Activated naive CD4-positive, alpha-beta T cell treated with anti-CD3 and anti-CD28 coated beads for 36 hours (primary cell): ENCODE measurements at regions of chr17 and their contacts with region 1.

Region 1: GRCh38 chr17:58006924-58007780 is at the start of gene SRSF1:
- DNase-seq: peak; percentile 99
- H3K4me3 Mint-ChIP-seq: peak within 1 kb of the TSS; percentile 99
- H3K27ac Mint-ChIP-seq: peak within 1 kb of the TSS; percentile 100
- H3K4me1 Mint-ChIP-seq: peaks cover 39% of the 10 kb centered on the region
- H3K27me3 Mint-ChIP-seq: no peaks in the 10 kb centered on the region
- total RNA-seq, gene SRSF1: 248 to 257 TPM

Region 2: DNA sequence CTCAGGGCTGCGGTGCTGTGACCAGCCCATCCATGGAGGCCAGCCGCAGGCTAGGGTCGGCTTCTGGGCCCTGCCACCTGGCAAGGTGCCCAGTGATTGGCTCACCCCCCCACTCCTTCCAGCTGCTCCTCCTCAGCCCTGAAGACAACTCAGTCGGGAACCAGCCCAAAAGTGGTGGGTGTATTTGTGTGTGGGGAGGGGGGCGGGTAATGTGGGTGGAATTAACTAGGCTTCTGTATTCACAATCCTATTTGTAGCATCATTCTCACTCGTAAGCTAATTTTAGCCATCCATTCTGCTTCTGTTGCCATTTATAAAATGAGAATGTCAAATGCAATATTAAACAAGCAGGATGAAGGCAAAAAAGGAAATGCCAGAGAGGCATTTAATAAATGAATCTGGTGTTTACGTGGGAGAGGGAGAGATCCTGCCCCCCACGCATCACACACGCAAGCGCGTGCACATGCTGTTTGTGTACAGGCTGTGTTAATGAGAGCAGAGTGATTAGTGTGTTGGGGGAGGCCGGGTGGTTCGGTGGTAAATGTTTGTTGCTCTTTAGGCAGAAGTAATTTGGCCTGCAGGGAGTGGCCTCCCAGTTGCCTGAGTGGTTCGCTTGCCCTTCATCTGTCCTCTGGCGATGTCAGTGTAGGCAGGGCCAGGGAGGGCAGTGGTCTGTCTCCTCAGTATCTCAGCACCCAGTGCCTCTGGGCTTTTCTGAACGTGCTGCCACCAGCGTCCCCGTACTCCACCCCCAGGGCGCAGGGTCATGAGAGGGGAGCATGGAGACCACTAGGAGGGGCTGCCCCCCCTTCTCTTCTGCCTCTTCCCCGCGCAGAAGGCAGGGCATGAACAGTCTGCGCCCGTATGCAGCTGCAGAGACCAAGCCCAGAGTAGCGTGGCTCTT is 402.1 kb before region 1 on chr17:
- CTCF ChIA-PET with region 1: no interaction called
- intact Hi-C with region 1: loop called (anchors 1 kb)
- DNase-seq: peak; percentile 63
- H3K4me3 Mint-ChIP-seq: peak overlapping the region; percentile 36
- H3K27ac Mint-ChIP-seq: peak overlapping the region; percentile 94
- H3K4me1 Mint-ChIP-seq: peaks cover 81% of the 10 kb centered on the region
- H3K27me3 Mint-ChIP-seq: no peaks in the 10 kb centered on the region

Region 3: GRCh38 chr17:57732062-57732461 is 275.1 kb before region 1 on chr17:
- CTCF ChIA-PET with region 1: no interaction called
- intact Hi-C with region 1: no loop called
- DNase-seq: no peak
- H3K4me3 Mint-ChIP-seq: no peak overlapping the region
- H3K27ac Mint-ChIP-seq: no peak overlapping the region
- H3K4me1 Mint-ChIP-seq: no peaks in the 10 kb centered on the region
- H3K27me3 Mint-ChIP-seq: no peaks in the 10 kb centered on the region

Region 4: DNA sequence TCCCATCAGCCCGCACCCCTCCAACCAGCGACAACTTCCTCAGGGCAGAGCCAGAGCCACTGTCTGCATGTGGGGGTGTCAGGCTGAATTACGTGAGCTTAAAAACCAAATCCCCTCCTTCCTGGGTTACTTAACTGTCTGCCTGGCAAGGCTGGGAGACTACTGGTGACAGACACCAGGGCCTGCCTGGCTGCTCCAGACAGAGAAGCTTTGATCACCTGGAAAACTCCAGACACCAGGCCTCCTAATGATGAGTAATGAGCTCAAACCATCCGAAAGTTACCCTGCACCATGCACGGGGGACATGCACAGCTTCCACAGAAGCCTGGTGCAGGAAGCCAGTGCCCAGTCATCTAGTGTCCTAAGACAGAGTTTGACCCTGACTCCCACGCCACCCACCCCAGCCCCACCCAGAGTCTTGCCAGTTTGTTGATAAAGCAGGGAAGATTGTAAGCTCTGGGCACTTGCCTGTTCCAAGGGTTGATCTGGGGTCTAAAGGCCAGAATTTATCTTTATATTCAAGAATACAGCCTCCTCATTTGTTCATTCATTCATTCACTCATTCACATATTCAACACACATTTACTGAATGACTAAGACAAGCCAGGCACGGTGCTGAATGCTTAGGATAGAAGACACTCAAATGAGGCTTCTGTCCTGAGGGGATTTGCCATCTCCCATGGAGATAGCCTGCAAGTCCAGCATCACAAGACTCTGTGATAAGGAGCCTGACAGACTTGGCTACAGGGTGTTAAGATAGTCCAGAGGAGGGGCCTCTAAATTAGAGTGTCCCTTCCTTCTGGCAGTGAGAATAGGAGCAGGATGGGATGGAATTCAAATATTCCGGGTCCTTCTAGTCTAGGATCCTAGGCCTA is 254.9 kb before region 1 on chr17:
- CTCF ChIA-PET with region 1: no interaction called
- intact Hi-C with region 1: no loop called
- DNase-seq: no peak
- H3K4me3 Mint-ChIP-seq: no peak overlapping the region
- H3K27ac Mint-ChIP-seq: no peak overlapping the region
- H3K4me1 Mint-ChIP-seq: no peaks in the 10 kb centered on the region
- H3K27me3 Mint-ChIP-seq: peaks cover 2% of the 10 kb centered on the region

Region 5: GRCh38 chr17:58052945-58053846 is 46.0 kb after region 1 on chr17:
- CTCF ChIA-PET with region 1: no interaction called
- intact Hi-C with region 1: loop called (anchors 1 kb)
- DNase-seq: peak; percentile 49
- H3K4me3 Mint-ChIP-seq: no peak overlapping the region
- H3K27ac Mint-ChIP-seq: peak overlapping the region; percentile 20
- H3K4me1 Mint-ChIP-seq: peaks cover 17% of the 10 kb centered on the region
- H3K27me3 Mint-ChIP-seq: no peaks in the 10 kb centered on the region

Region 6: DNA sequence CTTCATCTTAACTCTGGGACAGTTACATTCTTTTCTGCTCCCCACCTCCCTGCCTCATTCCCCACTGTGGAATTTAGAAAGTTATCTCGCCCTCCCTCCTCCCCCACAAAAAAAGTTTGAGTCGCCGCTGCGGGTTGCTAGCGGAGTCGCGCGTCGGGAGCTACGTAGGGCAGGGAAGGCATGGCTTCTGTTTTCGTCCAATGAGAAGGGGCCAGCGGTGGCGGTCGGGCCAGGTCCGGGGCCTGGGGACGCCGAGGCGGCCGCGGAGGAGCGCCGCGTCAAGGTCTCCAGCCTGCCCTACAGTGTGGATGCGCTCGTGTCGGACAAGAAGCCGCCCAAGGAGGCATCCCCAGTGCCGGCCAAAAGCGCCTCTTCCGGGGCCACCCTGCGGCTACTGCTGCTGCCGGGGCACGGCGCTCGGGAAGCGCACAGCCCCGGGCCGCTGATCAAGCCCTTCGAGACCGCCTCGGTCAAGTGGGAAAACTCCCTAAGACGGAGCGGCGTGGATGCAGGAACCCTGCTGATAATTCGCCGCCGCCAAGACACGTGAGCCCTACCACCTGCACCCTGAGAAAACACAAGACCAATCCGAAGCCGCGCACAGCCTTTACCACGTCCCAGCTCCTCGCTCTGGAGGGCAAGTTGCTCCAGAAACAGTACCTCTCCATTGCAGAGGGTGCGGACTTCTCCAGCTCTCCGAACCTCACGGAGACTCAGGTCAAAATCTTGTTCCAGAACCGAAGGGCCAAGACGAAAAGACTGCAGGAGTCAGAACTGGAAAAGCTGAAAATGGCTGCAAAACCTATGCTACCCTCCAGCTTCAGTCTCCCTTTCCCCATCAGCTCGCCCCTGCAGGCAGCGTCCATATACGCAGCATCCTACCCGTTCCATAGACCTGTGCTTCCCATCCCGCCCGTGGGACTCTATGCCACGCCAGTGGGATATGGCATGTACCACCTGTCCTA is 150.0 kb after region 1 on chr17:
- CTCF ChIA-PET with region 1: no interaction called
- intact Hi-C with region 1: loop called (anchors 2 kb)
- DNase-seq: peak; percentile 71
- H3K4me3 Mint-ChIP-seq: peak overlapping the region; percentile 76
- H3K27ac Mint-ChIP-seq: peak overlapping the region; percentile 66
- H3K4me1 Mint-ChIP-seq: peaks cover 41% of the 10 kb centered on the region
- H3K27me3 Mint-ChIP-seq: no peaks in the 10 kb centered on the region

Region 7: DNA sequence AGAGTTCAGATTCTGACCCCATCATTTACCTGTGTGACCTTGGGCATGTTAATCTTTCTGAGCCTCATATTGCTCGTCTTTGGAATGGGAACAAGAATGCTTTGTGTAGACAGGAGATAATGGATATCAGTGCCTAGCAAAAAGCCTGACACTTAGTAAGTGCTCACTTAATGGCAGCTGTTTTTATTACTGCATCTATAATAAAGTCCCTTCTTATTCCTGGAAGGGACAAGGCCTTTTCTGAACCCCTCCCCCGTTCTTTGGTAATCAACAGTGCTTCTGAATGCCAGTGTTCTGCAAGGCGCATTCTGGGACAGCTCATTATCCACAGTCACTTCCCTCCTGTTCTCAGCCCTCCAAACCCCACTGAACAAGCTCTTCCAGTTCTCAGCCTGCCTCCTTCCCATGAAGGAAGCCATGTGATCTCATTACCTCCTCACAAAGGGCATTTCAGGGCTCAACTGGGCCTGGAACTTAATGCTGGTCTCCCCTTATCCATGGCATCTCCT is 370.0 kb after region 1 on chr17:
- CTCF ChIA-PET with region 1: no interaction called
- intact Hi-C with region 1: no loop called
- DNase-seq: no peak
- H3K4me3 Mint-ChIP-seq: no peak overlapping the region
- H3K27ac Mint-ChIP-seq: no peak overlapping the region
- H3K4me1 Mint-ChIP-seq: peaks cover 27% of the 10 kb centered on the region
- H3K27me3 Mint-ChIP-seq: no peaks in the 10 kb centered on the region

Region 8: GRCh38 chr17:58421711-58422110 is 414.6 kb after region 1 on chr17:
- CTCF ChIA-PET with region 1: no interaction called
- intact Hi-C with region 1: no loop called
- DNase-seq: no peak
- H3K4me3 Mint-ChIP-seq: no peak overlapping the region
- H3K27ac Mint-ChIP-seq: no peak overlapping the region
- H3K4me1 Mint-ChIP-seq: peaks cover 13% of the 10 kb centered on the region
- H3K27me3 Mint-ChIP-seq: no peaks in the 10 kb centered on the region

Region 9: GRCh38 chr17:58487589-58488427 is 480.7 kb after region 1 on chr17 and contains the start of gene HSF5:
- CTCF ChIA-PET with region 1: no interaction called
- intact Hi-C with region 1: loop called (anchors 1 kb)
- DNase-seq: peak; percentile 79
- H3K4me3 Mint-ChIP-seq: peak within 1 kb of the TSS; percentile 58
- H3K27ac Mint-ChIP-seq: no peak within 1 kb of the TSS
- H3K4me1 Mint-ChIP-seq: peaks cover 15% of the 10 kb centered on the region
- H3K27me3 Mint-ChIP-seq: no peaks in the 10 kb centered on the region
- total RNA-seq, gene HSF5: 3.6 to 4.1 TPM